CD4-positive, alpha-beta memory T cell (primary cell): ENCODE measurements at regions of chr6 and their contacts with region 1.

Region 1: DNA sequence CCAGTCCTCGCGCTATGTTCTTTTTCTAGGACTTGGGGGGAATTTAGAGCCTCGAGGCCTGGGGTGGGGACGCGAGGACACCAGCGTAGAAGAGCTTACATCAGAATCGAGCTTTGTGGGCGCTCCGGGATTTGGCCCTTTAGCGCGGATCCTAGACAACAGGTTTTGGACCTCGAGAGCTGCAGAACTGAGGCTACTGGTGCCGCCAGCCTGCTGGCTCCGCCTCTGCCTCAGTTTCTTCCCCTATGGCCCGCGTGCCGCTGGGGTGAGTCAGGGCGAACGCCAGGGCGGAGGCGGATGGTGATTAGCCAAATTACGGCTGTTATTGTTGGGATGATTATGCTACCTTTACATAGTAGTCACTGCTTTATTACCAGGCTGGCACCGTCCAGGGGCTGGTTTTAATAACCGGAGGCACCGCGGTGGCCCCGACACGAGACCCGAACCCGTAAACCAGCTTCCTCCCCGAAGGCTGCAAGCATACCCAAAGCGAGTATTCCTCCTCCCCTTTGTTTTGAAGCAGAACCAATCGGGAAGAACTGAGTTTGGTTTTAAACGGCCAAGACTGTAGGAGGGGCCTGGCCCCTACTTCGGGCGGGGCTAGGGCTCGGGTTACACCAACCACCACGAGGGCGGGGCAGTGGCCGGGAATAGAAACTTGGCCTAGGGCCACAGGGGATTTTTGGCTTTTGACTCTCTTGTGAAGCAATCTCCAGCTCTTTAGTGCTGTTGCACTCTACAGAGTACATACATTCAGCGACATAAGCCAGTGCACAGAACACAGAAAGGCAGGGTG is 639 bp upstream of the GTPBP2 start:
- DNase-seq: peak; percentile 82 to 96 (median 86)
- H3K4me3 ChIP-seq: peak overlapping the region; percentile 89 to 95
- H3K4me3 Mint-ChIP-seq: peak overlapping the region; percentile 98 to 100 (median 99)
- H3K27ac ChIP-seq: peak overlapping the region; percentile 84
- H3K27ac Mint-ChIP-seq: peak overlapping the region; percentile 97 to 99 (median 98)
- H3K4me1 ChIP-seq: peaks cover 33% of the 10 kb centered on the region
- H3K4me1 Mint-ChIP-seq: peaks cover 29 to 51% (median 35%) of the 10 kb centered on the region in 4 donors
- H3K27me3 ChIP-seq: no peaks in the 10 kb centered on the region
- H3K27me3 Mint-ChIP-seq: no peaks in the 10 kb centered on the region

Region 2: DNA sequence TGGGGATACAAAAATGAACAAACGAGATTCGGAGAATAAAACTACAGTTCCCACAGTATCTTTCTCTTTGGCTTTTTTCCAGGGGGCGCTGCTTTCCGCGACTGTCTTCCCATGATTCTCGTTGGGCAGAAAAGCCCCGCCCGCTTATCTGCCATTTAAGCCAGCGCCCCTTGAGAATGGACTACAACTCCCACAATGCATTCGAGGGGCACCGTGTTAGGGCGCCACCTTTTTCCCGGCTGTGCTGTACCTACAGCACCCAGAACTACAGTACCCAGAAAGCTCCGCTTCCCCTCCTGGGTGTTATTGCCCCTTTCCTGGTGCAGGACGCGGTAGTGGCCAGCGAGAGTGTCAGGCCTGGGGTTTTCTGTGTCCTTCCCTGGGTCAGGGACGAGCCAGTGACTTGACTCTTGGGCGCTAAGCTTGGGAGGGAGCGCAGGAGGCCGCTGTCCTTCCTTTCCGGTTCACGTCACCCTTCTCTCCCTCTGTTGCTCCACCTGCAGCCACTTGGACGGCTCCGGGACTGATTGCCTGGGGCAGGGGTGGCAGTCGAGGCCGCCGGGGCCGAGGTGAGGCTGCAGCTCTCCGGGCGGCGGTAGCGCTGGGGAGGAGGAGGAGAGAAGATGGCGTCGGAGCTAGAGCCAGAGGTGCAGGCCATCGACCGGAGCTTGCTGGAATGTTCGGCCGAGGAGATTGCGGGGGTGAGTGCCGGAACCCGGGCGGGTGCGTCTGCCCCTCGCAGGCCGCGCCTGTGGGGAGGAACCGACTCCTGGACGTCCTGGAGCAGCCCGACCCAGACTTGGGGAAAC is 1065.8 kb before region 1 on chr6 and contains the start of gene UBR2:
- CTCF ChIA-PET with region 1: no interaction called
- POLR2A ChIA-PET with region 1: interaction called, 3 read pairs
- intact Hi-C with region 1: loop called (anchors 10 kb)
- DNase-seq: peak; percentile 92 to 98 (median 95)
- H3K4me3 ChIP-seq: peak within 1 kb of the TSS; percentile 98 to 100
- H3K4me3 Mint-ChIP-seq: peak within 1 kb of the TSS; percentile 92 to 100 (median 98)
- H3K27ac ChIP-seq: peak within 1 kb of the TSS; percentile 94
- H3K27ac Mint-ChIP-seq: peak within 1 kb of the TSS; percentile 90 to 98 (median 96)
- H3K4me1 ChIP-seq: peaks cover 33% of the 10 kb centered on the region
- H3K4me1 Mint-ChIP-seq: peaks cover 21 to 43% (median 28%) of the 10 kb centered on the region in 4 donors
- H3K27me3 ChIP-seq: no peaks in the 10 kb centered on the region
- H3K27me3 Mint-ChIP-seq: peaks cover 0 to 1% of the 10 kb centered on the region in 2 donors
- total RNA-seq, gene UBR2: 55.0 to 55.7 TPM

Region 3: DNA sequence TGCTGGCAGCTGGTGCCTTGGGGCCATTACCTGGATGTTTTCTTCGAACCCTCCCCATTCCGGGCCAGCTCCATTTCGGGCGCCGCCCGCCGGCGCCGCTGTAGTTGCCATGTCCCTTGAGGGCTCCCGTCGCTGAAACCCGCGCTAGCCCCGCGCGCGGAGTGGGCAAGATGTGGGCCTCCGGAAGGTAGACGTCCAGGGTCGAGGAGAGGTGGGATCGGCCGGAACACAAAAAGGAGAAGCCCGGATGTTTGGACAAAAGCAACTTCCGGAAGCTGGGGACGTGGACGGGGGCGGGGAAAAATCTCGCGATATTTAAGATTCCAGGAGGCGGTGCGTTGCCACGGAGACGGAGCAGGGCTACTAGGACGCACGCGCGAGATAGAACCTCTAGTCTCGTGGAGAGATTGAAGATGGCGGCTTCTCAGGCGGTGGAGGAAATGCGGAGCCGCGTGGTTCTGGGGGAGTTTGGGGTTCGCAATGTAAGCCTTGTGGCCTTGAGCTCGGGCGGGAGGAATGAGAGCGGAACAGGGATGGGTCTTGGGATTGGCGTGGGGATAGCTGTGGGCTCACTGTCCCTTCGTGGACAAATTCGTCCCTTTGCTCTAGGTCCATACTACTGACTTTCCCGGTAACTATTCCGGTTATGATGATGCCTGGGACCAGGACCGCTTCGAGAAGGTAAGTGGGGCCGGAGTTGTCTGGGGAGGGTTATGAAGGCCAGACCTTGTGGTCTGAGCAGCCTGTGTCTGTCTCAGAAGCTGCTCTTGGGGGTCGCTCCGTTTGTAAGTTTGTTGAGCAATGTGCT is 112.8 kb before region 1 on chr6 and contains the starts of genes POLR1C and YIPF3:
- CTCF ChIA-PET with region 1: no interaction called
- POLR2A ChIA-PET with region 1: interaction called, 5 read pairs
- intact Hi-C with region 1: loop called (anchors 2 kb)
- DNase-seq: peak; percentile 91 to 97 (median 96)
- H3K4me3 ChIP-seq: peak within 1 kb of the TSS; percentile 91 to 99
- H3K4me3 Mint-ChIP-seq: no peak within 1 kb of the TSS
- H3K27ac ChIP-seq: peak within 1 kb of the TSS; percentile 92
- H3K27ac Mint-ChIP-seq: no peak within 1 kb of the TSS
- H3K4me1 ChIP-seq: peaks cover 44% of the 10 kb centered on the region
- H3K4me1 Mint-ChIP-seq: peaks cover 10 to 36% (median 24%) of the 10 kb centered on the region in 4 donors
- H3K27me3 ChIP-seq: no peaks in the 10 kb centered on the region
- H3K27me3 Mint-ChIP-seq: no peaks in the 10 kb centered on the region
- total RNA-seq, gene POLR1C: 42.5 to 47.7 TPM
- total RNA-seq, gene YIPF3: 74.8 to 82.9 TPM

Region 4: DNA sequence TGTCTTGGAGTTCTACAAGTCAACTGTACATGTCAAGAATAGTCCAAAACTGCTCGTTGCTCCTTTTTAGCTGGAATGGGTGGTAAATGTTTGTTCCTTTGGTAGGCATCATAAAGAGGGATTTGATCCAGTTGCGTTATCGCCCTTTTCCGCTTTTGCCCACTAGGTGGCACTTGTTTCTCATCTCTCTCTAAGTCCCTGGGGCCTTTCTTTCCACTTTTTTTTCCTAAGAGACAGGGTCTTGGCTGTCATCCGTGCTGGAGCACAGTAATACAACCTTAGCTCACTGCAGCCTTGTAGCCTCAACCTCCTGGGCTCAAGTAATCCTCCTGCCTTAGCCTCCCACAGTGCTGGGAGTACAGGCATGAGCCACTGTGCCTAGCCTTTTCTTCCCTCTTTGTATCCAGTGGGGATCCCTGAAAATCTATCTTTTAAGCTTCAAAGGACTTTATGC is 21.4 kb before region 1 on chr6:
- CTCF ChIA-PET with region 1: interaction called, 10 read pairs
- POLR2A ChIA-PET with region 1: interaction called, 4 read pairs
- intact Hi-C with region 1: no loop called
- DNase-seq: peak; percentile 36 to 60 (median 49)
- H3K4me3 ChIP-seq: no peak overlapping the region
- H3K4me3 Mint-ChIP-seq: no peak overlapping the region
- H3K27ac ChIP-seq: no peak overlapping the region
- H3K27ac Mint-ChIP-seq: peak overlapping the region in 6 of 7 donors; percentile 1 to 78 (median 26)
- H3K4me1 ChIP-seq: no peaks in the 10 kb centered on the region
- H3K4me1 Mint-ChIP-seq: peaks cover 3 to 7% (median 6%) of the 10 kb centered on the region in 4 donors
- H3K27me3 ChIP-seq: no peaks in the 10 kb centered on the region
- H3K27me3 Mint-ChIP-seq: no peaks in the 10 kb centered on the region

Region 5: DNA sequence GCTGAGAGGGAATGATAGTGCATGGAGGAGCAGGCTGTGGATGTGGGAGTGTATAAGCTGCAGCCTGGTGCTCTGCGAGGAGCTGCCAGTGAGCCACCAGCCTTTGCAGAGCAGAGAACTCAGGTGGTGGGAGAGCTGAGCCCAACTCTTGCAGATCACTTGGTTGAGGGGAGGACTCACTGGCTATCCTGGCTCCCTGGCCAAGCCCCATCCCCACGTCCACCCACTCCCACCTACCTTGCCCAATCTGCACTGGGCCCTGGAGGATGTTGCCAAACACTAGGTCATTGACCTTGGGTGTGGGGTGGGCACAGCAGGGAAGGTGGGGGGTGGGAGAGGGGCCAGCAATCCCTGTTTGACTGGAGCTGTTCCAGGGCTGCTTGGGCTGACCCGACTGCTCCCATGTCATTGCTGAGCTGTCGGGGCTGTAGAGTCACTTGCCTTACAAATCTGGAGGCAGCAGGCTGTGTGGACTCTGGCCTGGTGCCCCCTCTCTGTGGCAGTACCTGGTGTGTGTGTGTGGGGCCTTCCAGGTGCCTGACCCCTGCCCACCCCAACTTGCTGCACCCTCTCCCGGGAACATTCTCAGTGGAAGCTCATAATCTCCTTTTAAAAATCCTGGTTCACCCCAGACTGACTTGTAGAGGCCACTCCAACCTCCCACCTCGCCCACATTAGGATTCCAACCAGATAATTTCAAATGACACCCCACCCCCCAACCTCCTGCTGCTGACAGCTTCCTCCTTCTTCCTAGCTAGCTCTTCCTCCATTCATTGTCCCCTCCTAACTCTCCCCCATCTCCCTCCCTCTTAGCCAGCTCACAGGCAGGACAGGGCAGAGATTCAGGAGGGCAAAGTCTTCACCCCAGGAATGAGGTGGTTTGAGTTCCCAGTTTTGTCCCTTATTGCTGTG is 335.2 kb after region 1 on chr6:
- CTCF ChIA-PET with region 1: no interaction called
- POLR2A ChIA-PET with region 1: no interaction called
- intact Hi-C with region 1: no loop called
- DNase-seq: no peak
- H3K4me3 ChIP-seq: no peak overlapping the region
- H3K4me3 Mint-ChIP-seq: no peak overlapping the region
- H3K27ac ChIP-seq: no peak overlapping the region
- H3K27ac Mint-ChIP-seq: peak overlapping the region in 1 of 7 donors; percentile 17
- H3K4me1 ChIP-seq: no peaks in the 10 kb centered on the region
- H3K4me1 Mint-ChIP-seq: no peaks in the 10 kb centered on the region
- H3K27me3 ChIP-seq: no peaks in the 10 kb centered on the region
- H3K27me3 Mint-ChIP-seq: peaks cover 7 to 8% of the 10 kb centered on the region in 2 donors

Region 6: GRCh38 chr6:44238687-44239350 is 609.1 kb after region 1 on chr6:
- CTCF ChIA-PET with region 1: no interaction called
- POLR2A ChIA-PET with region 1: no interaction called
- intact Hi-C with region 1: no loop called
- DNase-seq: no peak
- H3K4me3 ChIP-seq: no peak overlapping the region
- H3K4me3 Mint-ChIP-seq: peak overlapping the region; percentile 75 to 93 (median 90)
- H3K27ac ChIP-seq: no peak overlapping the region
- H3K27ac Mint-ChIP-seq: peak overlapping the region; percentile 13 to 98 (median 89)
- H3K4me1 ChIP-seq: peaks cover 12% of the 10 kb centered on the region
- H3K4me1 Mint-ChIP-seq: peaks cover 2 to 15% (median 9%) of the 10 kb centered on the region in 4 donors
- H3K27me3 ChIP-seq: no peaks in the 10 kb centered on the region
- H3K27me3 Mint-ChIP-seq: no peaks in the 10 kb centered on the region